Endothelial cell of umbilical vein (primary cell): ENCODE measurements at regions of chr4 and their contacts with region 1.

Region 1: GRCh38 chr4:55395529-55396307 is at the start of gene TMEM165:
- DNase-seq: peak; percentile 88
- H3K4me3 ChIP-seq: peak within 1 kb of the TSS; percentile 89 to 98 (median 91)
- H3K27ac ChIP-seq: peak within 1 kb of the TSS; percentile 79
- H3K4me1 ChIP-seq: peaks cover 19% of the 10 kb centered on the region
- H3K27me3 ChIP-seq: no peaks in the 10 kb centered on the region
- CTCF ChIP-seq: no peak
- POLR2A ChIP-seq: peak; percentile 97
- total RNA-seq, gene TMEM165: 159 and 177 TPM in 2 replicates

Region 2: GRCh38 chr4:55008166-55009070 is 387.3 kb before region 1 on chr4:
- CTCF ChIA-PET with region 1: no interaction called
- POLR2A ChIA-PET with region 1: no interaction called
- dilution Hi-C with region 1: no loop called
- intact Hi-C with region 1: loop called (anchors 5 kb)
- DNase-seq: peak; percentile 94
- H3K4me3 ChIP-seq: no peak overlapping the region
- H3K27ac ChIP-seq: peak overlapping the region; percentile 21
- H3K4me1 ChIP-seq: peaks cover 11% of the 10 kb centered on the region
- H3K27me3 ChIP-seq: no peaks in the 10 kb centered on the region
- CTCF ChIP-seq: peak; percentile 41 to 57
- POLR2A ChIP-seq: no peak

Region 3: GRCh38 chr4:55078987-55079386 is 316.7 kb before region 1 on chr4:
- CTCF ChIA-PET with region 1: no interaction called
- POLR2A ChIA-PET with region 1: no interaction called
- dilution Hi-C with region 1: no loop called
- intact Hi-C with region 1: loop called (anchors 5 kb)
- DNase-seq: peak; percentile 92
- H3K4me3 ChIP-seq: peak overlapping the region in 1 of 3 experiments; percentile 28
- H3K27ac ChIP-seq: peak overlapping the region; percentile 99
- H3K4me1 ChIP-seq: peaks cover 48% of the 10 kb centered on the region
- H3K27me3 ChIP-seq: no peaks in the 10 kb centered on the region
- CTCF ChIP-seq: no peak
- POLR2A ChIP-seq: peak; percentile 79

Region 4: DNA sequence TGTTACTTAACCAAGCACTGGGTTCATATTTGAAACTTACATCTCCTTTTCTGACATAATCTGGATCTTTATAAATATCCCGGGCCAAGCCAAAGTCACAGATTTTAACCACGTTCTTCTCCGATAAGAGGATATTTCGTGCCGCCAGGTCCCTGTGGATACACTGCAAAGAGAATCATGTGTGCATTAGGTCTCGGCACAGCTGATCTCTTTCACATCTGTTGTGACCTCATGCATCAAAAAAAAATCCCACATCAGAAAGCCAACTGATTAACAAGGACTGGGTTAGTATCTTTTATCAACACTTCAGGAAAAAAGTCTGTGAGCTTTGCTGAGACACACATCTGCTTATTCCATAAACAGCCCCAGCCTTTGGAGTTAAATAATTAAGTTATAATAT is 305.8 kb before region 1 on chr4:
- CTCF ChIA-PET with region 1: no interaction called
- POLR2A ChIA-PET with region 1: no interaction called
- dilution Hi-C with region 1: no loop called
- intact Hi-C with region 1: no loop called
- DNase-seq: no peak
- H3K4me3 ChIP-seq: no peak overlapping the region
- H3K27ac ChIP-seq: no peak overlapping the region
- H3K4me1 ChIP-seq: peaks cover 20% of the 10 kb centered on the region
- H3K27me3 ChIP-seq: no peaks in the 10 kb centered on the region
- CTCF ChIP-seq: no peak
- POLR2A ChIP-seq: no peak

Region 5: GRCh38 chr4:55175779-55176231 is 219.9 kb before region 1 on chr4:
- CTCF ChIA-PET with region 1: no interaction called
- POLR2A ChIA-PET with region 1: no interaction called
- dilution Hi-C with region 1: no loop called
- intact Hi-C with region 1: loop called (anchors 5 kb)
- DNase-seq: peak; percentile 66
- H3K4me3 ChIP-seq: peak overlapping the region in 1 of 3 experiments; percentile 39
- H3K27ac ChIP-seq: peak overlapping the region; percentile 91
- H3K4me1 ChIP-seq: peaks cover 72% of the 10 kb centered on the region
- H3K27me3 ChIP-seq: no peaks in the 10 kb centered on the region
- CTCF ChIP-seq: no peak
- POLR2A ChIP-seq: no peak

Region 6: GRCh38 chr4:55303818-55304217 is 91.9 kb before region 1 on chr4:
- CTCF ChIA-PET with region 1: no interaction called
- POLR2A ChIA-PET with region 1: no interaction called
- dilution Hi-C with region 1: no loop called
- intact Hi-C with region 1: no loop called
- DNase-seq: peak; percentile 77
- H3K4me3 ChIP-seq: no peak overlapping the region
- H3K27ac ChIP-seq: peak overlapping the region; percentile 46
- H3K4me1 ChIP-seq: peaks cover 10% of the 10 kb centered on the region
- H3K27me3 ChIP-seq: no peaks in the 10 kb centered on the region
- CTCF ChIP-seq: no peak
- POLR2A ChIP-seq: no peak

Region 7: GRCh38 chr4:55363691-55364351 is 31.9 kb before region 1 on chr4:
- CTCF ChIA-PET with region 1: no interaction called
- POLR2A ChIA-PET with region 1: no interaction called
- dilution Hi-C with region 1: no loop called
- intact Hi-C with region 1: loop called (anchors 5 kb)
- DNase-seq: no peak
- H3K4me3 ChIP-seq: no peak overlapping the region
- H3K27ac ChIP-seq: peak overlapping the region; percentile 84
- H3K4me1 ChIP-seq: peaks cover 15% of the 10 kb centered on the region
- H3K27me3 ChIP-seq: no peaks in the 10 kb centered on the region
- CTCF ChIP-seq: no peak
- POLR2A ChIP-seq: no peak

Region 8: GRCh38 chr4:55409468-55410171 is 13.9 kb after region 1 on chr4:
- CTCF ChIA-PET with region 1: interaction called, 12 read pairs
- POLR2A ChIA-PET with region 1: interaction called, 9 read pairs
- dilution Hi-C with region 1: no loop called
- intact Hi-C with region 1: no loop called
- DNase-seq: no peak
- H3K4me3 ChIP-seq: no peak overlapping the region
- H3K27ac ChIP-seq: no peak overlapping the region
- H3K4me1 ChIP-seq: no peaks in the 10 kb centered on the region
- H3K27me3 ChIP-seq: no peaks in the 10 kb centered on the region
- CTCF ChIP-seq: no peak
- POLR2A ChIP-seq: no peak